ENCODE measurements at regions of chr5 and their contacts with region 1.

Region 1: DNA sequence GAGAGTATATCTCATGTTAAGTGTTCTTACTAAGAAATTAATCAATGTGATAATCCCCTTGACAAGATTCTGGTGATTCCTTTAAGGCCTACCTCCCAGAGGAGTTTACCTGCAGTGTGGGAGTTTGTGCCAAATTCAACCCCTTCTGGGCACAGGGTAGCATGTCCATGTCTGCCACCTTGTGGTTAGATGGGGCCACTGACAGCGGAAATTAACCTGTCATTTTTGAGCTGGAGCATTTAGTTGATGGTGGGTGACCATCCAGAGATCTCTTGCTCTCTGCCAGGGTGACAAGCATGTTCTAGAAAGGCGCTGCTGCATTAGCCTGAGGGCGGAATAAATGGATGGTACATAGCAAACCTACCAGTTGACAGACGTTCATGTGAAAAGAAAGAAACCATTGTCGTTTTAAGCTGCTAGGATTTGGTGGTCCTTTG is 132.2 kb downstream of the FBXO4 start:
- DNase-seq: peak; percentile 52
- H3K4me3 ChIP-seq: no peak overlapping the region
- H3K27ac ChIP-seq: no peak overlapping the region
- H3K4me1 ChIP-seq: no peaks in the 10 kb centered on the region
- H3K27me3 ChIP-seq: 0 out of 2 replicates have a peak, but pooled peaks cover 4% of the 10 kb centered on the region

Region 2: GRCh38 chr5:41539454-41539853 is 517.8 kb before region 1 on chr5:
- in situ Hi-C with region 1: no loop called
- DNase-seq: no peak
- H3K4me3 ChIP-seq: no peak overlapping the region
- H3K27ac ChIP-seq: no peak overlapping the region
- H3K4me1 ChIP-seq: no peaks in the 10 kb centered on the region
- H3K27me3 ChIP-seq: no peaks in the 10 kb centered on the region

Region 3: DNA sequence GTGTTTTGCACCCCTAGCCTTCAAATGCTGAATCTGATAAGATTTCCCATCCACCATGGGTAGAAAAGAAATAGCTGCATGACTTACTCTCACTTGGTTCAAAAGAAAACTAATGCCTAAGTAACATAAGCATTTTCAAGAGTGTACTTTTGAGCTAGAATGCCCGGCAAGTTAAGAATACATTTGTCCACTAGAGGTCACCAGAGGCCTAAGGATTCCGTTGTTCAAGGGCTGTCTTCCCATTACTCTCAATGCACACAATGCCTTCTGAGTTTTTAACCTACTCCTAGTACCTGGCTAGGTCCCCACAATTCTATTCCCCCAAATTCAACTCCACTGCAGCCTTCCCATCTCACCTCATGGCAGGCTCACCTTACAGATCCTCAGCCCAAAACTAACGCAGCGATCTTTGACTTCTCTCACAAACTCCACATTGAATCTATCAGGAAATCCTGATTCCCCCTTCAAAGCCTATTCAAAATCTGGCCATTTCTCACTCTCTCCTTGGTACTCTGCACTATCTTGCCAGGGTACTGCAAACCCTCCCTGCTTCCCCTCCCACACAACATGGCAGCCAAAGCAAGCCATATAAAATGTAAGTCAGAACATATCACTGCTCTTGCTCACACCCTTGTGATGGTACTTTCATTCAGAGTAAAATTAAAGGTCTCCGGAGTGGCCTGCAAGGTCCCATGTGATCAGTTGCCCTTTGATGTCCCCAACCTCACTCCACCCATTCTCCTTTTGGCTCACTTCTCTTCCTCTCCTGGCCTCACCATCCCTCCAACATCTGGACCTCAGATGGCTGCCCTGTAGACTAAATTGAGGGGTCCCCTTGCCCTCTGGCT is 200.4 kb before region 1 on chr5:
- in situ Hi-C with region 1: loop called (anchors 10 kb)
- DNase-seq: peak; percentile 75
- H3K4me3 ChIP-seq: no peak overlapping the region
- H3K27ac ChIP-seq: no peak overlapping the region
- H3K4me1 ChIP-seq: no peaks in the 10 kb centered on the region
- H3K27me3 ChIP-seq: no peaks in the 10 kb centered on the region

Measured in GM23248 (cell line).